CD14-positive monocyte (primary cell): ENCODE measurements at regions of chr11 and their contacts with region 1.

Region 1: DNA sequence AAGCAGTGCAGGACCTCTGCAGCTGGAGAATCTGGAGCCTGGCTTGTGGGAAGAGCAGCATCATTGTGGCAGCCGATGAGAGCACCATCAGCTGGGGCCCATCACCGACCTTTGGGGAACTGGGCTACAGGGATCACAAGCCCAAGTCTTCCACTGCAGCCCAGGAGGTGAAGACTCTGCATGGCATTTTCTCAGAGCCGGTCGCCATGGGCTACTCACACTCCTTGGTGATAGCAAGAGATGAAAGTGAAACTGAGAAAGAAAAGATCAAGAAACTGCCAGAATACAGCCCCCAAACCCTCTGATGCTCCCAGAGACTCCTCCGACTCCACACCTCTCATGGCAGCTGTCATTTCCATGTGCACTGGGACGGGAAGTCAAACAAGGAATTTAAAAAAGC is 35.6 kb downstream of the ASRGL1 start:
- DNase-seq: no peak
- H3K4me3 ChIP-seq: no peak overlapping the region
- H3K4me3 Mint-ChIP-seq: no peak overlapping the region
- H3K27ac ChIP-seq: no peak overlapping the region
- H3K27ac Mint-ChIP-seq: peak overlapping the region in 3 of 7 donors; percentile 42 to 55 (median 42)
- H3K4me1 ChIP-seq: peaks cover 6 to 13% of the 10 kb centered on the region in 2 donors
- H3K4me1 Mint-ChIP-seq: peaks cover 22% of the 10 kb centered on the region
- H3K27me3 ChIP-seq: no peaks in the 10 kb centered on the region
- H3K27me3 Mint-ChIP-seq: no peaks in the 10 kb centered on the region
- CTCF ChIP-seq: no peak

Region 2: GRCh38 chr11:62337303-62338181 is 35.3 kb before region 1 on chr11 and contains the start of gene ASRGL1:
- intact Hi-C with region 1: loop called in 1 of 2 experiments (anchors 2 kb)
- DNase-seq: peak; percentile 70 to 84 (median 75)
- H3K4me3 ChIP-seq: peak within 1 kb of the TSS; percentile 60 to 89 (median 84)
- H3K4me3 Mint-ChIP-seq: peak within 1 kb of the TSS; percentile 98 to 99
- H3K27ac ChIP-seq: peak within 1 kb of the TSS in 1 of 2 donors; percentile 62
- H3K27ac Mint-ChIP-seq: peak within 1 kb of the TSS in 6 of 7 donors; percentile 67 to 89 (median 81)
- H3K4me1 ChIP-seq: peaks cover 62 to 71% of the 10 kb centered on the region in 2 donors
- H3K4me1 Mint-ChIP-seq: peaks cover 85% of the 10 kb centered on the region
- H3K27me3 ChIP-seq: no peaks in the 10 kb centered on the region
- H3K27me3 Mint-ChIP-seq: no peaks in the 10 kb centered on the region
- CTCF ChIP-seq: no peak
- polyA plus RNA-seq, gene ASRGL1: 22.3 to 57.8 (median 50.6) TPM